ENCODE measurements at regions of chr9 and their contacts with region 1.

Region 1: GRCh38 chr9:129641746-129642513 is at the start of gene ASB6:
- DNase-seq: peak; percentile 94 to 99
- H3K4me3 ChIP-seq: peak within 1 kb of the TSS; percentile 80
- CTCF ChIP-seq: peak in 1 of 3 donors; percentile 100
- POLR2A ChIP-seq: no peak
- total RNA-seq, gene ASB6: 33.0 to 46.9 (median 40.1) TPM

Region 2: GRCh38 chr9:129726322-129727160 is 84.6 kb after region 1 on chr9:
- intact Hi-C with region 1: no loop called
- DNase-seq: peak; percentile 71 to 95
- H3K4me3 ChIP-seq: no peak overlapping the region
- CTCF ChIP-seq: peak in 1 of 3 donors; percentile 87
- POLR2A ChIP-seq: no peak

Region 3: DNA sequence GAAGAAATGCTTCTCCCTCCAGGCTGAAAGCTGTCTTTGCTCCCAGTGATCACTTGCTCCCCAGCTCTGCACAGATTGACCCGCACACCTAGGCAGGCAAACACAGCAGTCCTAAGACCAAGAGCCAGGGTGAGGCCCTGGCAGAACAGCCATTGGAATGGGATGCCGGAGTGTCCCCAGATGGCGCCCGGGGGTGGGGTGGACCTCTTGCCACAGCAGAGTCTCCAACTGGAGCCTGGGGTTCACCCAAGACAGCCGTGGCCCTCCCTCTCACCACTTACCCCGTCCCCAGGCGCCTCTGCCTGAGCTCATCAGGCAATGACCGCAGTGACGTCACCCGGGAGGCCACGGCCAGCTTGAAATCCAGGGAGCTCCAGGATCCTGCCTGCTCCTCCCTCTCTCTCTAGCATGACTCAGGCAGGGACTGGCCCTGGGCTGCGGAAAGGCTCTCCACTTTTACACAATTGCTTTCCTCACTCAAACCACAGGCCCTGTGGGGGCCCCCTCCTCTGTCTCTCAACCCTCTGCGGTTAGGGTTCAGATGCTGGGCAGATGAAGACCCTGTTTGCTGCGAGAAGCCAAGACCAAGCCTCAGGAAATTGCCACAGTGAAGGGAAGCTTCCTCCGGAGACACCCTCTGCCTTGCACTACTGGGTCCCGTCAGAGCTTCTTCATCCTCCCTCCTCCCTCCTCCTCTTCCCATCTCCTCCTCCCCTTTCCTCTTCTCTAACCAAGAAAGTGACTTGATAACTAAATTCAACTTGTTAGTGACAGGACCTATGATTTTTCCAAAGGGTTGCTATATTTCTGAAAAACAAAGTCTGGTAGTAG is 135.2 kb after region 1 on chr9:
- intact Hi-C with region 1: loop called (anchors 5 kb)
- DNase-seq: peak; percentile 93 to 99
- H3K4me3 ChIP-seq: no peak overlapping the region
- CTCF ChIP-seq: no peak
- POLR2A ChIP-seq: no peak

Region 4: DNA sequence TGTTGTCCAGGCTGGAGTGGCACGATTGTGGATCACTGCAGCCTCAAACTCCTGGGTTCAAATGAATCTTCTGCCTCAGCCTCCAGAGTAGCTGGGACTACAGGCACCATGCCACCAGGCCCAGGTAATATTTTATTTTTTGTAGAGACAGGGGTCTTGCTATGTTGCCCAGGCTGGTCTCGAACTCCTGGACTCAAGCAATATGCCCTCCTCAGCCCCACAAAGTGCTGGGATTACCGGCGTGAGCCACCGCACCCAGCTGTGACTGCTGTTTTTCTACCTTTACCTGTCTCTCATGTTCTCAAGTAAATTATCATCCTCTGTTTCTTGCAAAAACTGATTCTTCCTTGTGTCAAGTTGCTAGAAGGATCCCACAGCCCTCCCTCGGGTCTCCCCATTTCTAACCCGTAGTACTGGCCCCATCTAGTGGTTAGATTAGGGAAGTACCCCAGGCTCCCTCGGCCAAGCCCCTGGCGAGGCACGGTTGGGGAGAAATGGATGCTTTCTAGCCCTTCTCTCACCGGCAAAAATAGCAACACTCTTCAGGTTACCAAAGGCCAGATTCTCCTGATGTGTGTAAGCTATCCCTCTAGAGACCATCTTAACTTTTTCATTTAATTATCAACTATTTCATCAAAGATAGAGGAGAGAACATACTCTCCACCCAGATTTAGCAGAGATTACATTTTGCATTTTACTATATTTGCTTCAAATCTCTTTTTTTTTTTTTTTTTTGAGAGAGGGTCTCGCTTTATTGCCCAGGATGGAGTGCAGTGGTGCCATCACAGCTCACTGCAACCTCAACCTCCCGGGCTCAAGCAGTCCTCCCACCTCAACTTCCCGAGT is 141.8 kb after region 1 on chr9:
- intact Hi-C with region 1: loop called (anchors 5 kb)
- DNase-seq: peak; percentile 69 to 95
- H3K4me3 ChIP-seq: no peak overlapping the region
- CTCF ChIP-seq: peak in 1 of 3 donors; percentile 87
- POLR2A ChIP-seq: no peak

Region 5: DNA sequence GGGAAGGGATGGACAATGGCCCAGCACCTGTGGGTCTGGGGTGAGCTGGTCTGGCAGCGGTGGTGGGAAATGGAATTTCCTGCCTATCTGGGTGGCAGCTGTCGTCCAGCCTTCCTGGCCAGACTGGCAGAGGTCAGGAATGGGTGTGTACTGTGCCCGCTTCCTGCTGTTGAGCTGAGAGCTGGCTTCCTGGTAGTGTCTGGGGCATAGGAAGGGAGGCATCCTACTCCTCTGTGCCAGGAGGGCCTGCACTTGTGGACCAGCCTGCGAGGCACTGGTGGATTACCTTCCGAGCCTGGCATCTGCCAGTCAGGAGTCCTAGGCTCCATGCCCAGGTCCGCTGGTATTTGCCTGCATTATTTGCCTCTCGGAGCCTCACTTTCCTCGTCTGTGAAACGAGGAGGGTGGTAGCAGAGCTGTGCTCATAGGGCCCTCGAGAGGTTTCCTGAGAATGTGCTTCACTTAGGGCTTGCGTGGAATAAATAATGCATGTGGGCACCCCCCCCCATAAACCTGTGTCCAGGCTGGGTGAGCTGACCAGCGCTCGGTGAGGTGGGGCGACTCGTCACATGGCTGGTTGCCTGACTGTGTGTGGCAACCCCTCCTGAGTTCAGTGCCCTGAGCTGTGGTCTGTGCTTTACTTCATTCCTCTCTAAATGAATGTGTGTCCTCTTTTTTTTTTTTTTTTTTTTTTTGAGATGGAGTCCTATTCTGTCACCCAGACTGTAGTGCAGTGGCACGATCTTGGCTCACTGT is 671.4 kb after region 1 on chr9:
- intact Hi-C with region 1: no loop called
- DNase-seq: no peak
- H3K4me3 ChIP-seq: no peak overlapping the region
- CTCF ChIP-seq: no peak
- POLR2A ChIP-seq: no peak